Activated B cell treated with CpG ODN at 0.5 μM for 24 hours (primary cell): ENCODE measurements at regions of chr17 and their contacts with region 1.

Region 1: DNA sequence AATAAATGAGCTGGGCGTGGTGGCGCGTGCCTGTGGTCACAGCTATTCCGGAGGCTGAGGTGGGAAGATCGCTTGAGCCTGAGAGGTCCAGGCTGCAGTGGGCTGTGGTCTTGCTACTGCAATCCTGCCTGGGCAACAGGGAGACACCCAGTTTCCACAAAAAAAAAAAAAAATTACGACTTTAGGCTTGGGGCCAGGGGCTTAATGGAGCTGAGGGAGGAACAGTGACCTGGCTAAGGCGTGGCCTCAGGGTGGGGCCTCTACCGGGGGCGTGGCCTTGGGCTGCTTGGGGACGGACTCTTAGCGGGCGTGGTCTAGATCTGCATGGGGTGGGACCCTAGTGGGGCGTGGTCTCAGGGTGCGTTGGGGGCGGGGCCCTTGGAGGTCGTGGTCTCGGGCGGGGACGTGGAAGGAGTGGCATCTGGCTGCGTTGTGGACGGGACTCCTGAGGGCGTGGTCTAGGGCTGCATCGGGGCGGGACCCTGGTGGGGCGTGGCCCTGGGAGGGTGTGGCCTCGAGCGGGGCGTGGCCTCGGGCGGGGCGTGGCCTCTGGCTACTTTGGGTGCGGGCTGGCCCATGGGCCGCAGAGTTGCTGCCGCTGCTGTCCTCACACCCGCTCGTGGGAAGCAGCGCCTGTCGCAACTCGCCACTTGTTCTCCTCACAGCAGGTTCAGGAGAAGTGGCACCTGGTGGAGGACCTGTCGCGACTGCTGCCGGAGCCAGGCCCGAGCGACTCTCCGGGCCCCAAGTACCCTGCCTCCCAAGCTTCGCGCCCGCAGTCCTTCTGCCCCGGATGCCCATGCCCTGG is 5.8 kb upstream of the C17orf99 start:
- DNase-seq: peak; percentile 95
- ATAC-seq: peak; percentile 91
- H3K4me3 Mint-ChIP-seq: peak overlapping the region; percentile 58
- H3K27ac Mint-ChIP-seq: peak overlapping the region; percentile 80
- H3K4me1 Mint-ChIP-seq: peaks cover 90% of the 10 kb centered on the region
- H3K27me3 Mint-ChIP-seq: no peaks in the 10 kb centered on the region
- CTCF ChIP-seq: no peak

Region 2: GRCh38 chr17:76432712-76433336 is 1707.5 kb before region 1 on chr17:
- CTCF ChIA-PET with region 1: no interaction called
- POLR2A ChIA-PET with region 1: interaction called, 13 read pairs
- intact Hi-C with region 1: no loop called
- DNase-seq: no peak
- ATAC-seq: peak; percentile 40
- H3K4me3 Mint-ChIP-seq: no peak overlapping the region
- H3K27ac Mint-ChIP-seq: peak overlapping the region; percentile 77
- H3K4me1 Mint-ChIP-seq: peaks cover 82% of the 10 kb centered on the region
- H3K27me3 Mint-ChIP-seq: no peaks in the 10 kb centered on the region
- CTCF ChIP-seq: no peak

Region 3: DNA sequence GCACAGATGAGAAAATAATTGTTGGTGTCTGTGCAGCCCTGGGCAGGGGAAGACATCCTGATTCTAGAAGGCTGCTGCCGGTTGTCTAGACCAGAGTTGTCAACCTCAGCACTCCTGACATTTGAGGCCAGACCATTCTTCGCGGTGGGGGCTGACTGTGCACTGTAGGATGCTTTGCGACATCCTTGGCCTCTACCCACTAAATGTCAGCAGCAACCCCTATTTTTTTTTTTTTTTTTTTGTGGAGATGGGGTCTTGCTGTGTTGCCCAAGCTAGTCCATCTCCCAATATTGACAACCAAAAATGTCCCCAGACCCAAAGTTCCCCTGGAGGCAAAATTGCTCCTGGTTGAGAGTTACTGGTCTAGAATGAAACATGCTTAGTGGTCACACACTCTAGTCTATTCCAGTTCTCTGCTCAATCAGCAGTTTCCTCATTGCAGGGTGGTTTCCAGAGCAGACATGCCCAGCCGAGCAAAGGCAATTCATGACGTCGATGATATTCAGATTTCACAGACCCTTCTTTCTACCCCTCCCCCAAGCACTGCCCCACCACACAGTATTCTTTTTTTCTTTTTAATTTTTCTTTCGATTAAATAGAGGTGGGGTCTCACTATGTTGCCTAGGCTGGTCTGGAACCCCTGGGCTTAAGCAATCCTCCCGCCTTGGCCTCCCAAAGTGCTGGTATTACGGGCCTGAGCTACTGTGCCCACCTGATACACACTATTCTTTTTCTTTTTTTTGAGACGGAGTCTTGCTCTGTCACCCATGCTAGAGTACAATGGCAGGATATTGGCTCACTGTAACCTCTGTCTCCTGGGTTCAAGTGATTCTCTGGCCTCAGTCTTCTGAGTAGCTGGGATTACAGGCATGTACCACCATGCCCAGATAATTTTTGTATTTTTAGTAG is 14.8 kb after region 1 on chr17:
- CTCF ChIA-PET with region 1: interaction called, 3 read pairs
- POLR2A ChIA-PET with region 1: interaction called, 2,404 read pairs
- intact Hi-C with region 1: loop called (anchors 1 kb)
- DNase-seq: no peak
- ATAC-seq: peak; percentile 74
- H3K4me3 Mint-ChIP-seq: peak overlapping the region; percentile 72
- H3K27ac Mint-ChIP-seq: peak overlapping the region; percentile 97
- H3K4me1 Mint-ChIP-seq: peaks cover 82% of the 10 kb centered on the region
- H3K27me3 Mint-ChIP-seq: no peaks in the 10 kb centered on the region
- CTCF ChIP-seq: no peak

Region 4: GRCh38 chr17:78176548-78177025 is 36.2 kb after region 1 on chr17:
- CTCF ChIA-PET with region 1: interaction called, 220 read pairs
- POLR2A ChIA-PET with region 1: interaction called, 2,404 read pairs
- intact Hi-C with region 1: no loop called
- DNase-seq: peak; percentile 76
- ATAC-seq: peak; percentile 69
- H3K4me3 Mint-ChIP-seq: no peak overlapping the region
- H3K27ac Mint-ChIP-seq: peak overlapping the region; percentile 63
- H3K4me1 Mint-ChIP-seq: peaks cover 79% of the 10 kb centered on the region
- H3K27me3 Mint-ChIP-seq: no peaks in the 10 kb centered on the region
- CTCF ChIP-seq: peak; percentile 92

Region 5: GRCh38 chr17:78378225-78379130 is 238.1 kb after region 1 on chr17 and contains the start of gene PGS1:
- CTCF ChIA-PET with region 1: no interaction called
- POLR2A ChIA-PET with region 1: no interaction called
- intact Hi-C with region 1: no loop called
- DNase-seq: peak; percentile 80
- ATAC-seq: peak; percentile 65
- H3K4me3 Mint-ChIP-seq: peak within 1 kb of the TSS; percentile 92
- H3K27ac Mint-ChIP-seq: peak within 1 kb of the TSS; percentile 77
- H3K4me1 Mint-ChIP-seq: peaks cover 45% of the 10 kb centered on the region
- H3K27me3 Mint-ChIP-seq: no peaks in the 10 kb centered on the region
- CTCF ChIP-seq: no peak
- total RNA-seq, gene PGS1: 55.2 and 76.1 TPM in 2 replicates

Region 6: GRCh38 chr17:78774956-78775571 is 634.7 kb after region 1 on chr17:
- CTCF ChIA-PET with region 1: no interaction called
- POLR2A ChIA-PET with region 1: no interaction called
- intact Hi-C with region 1: loop called (anchors 10 kb)
- DNase-seq: peak; percentile 57
- ATAC-seq: peak; percentile 56
- H3K4me3 Mint-ChIP-seq: peak overlapping the region; percentile 88
- H3K27ac Mint-ChIP-seq: peak overlapping the region; percentile 97
- H3K4me1 Mint-ChIP-seq: peaks cover 85% of the 10 kb centered on the region
- H3K27me3 Mint-ChIP-seq: no peaks in the 10 kb centered on the region
- CTCF ChIP-seq: no peak